ENCODE measurements at regions of chr5 and their contacts with region 1.

Region 1: DNA sequence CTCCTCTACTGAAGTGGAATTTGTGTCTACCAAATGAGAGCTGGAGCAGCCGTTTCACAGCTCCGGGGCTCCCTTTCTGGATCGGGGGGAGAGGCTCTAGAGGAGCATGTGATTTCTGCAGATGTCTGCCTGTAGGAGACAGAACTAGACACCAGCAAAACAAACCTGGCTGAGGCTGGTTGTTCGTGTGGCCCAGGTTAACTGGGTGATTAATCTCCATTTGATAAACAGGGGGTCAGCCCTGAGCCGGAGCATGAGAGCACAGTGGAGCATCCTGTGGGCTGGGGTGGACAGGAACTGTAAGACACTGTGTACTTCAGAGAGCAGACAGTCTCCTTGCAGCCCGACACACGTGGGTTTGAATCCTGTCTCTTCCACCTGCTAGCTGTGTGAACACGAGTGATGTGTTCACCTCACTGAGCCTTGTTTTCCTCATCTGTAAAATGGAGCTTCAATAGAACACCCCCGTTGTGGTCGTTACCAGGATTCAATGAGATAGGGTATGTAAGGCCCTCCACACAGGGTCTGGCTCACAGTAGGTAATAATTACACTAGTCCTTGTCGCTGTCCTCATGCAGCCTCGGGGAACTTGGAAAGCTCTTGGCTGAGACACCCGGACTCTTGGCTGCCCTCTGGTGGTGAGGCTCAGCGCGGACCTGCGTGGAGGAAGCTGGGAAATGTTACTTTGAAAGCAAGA is 12.9 kb downstream of the CXCL14 start:
- DNase-seq: peak; percentile 79

Region 2: GRCh38 chr5:135457424-135458071 is 108.3 kb before region 1 on chr5:
- CTCF ChIA-PET with region 1: interaction called, 102 read pairs
- POLR2A ChIA-PET with region 1: interaction called, 4 read pairs
- DNase-seq: peak; percentile 83

Region 3: DNA sequence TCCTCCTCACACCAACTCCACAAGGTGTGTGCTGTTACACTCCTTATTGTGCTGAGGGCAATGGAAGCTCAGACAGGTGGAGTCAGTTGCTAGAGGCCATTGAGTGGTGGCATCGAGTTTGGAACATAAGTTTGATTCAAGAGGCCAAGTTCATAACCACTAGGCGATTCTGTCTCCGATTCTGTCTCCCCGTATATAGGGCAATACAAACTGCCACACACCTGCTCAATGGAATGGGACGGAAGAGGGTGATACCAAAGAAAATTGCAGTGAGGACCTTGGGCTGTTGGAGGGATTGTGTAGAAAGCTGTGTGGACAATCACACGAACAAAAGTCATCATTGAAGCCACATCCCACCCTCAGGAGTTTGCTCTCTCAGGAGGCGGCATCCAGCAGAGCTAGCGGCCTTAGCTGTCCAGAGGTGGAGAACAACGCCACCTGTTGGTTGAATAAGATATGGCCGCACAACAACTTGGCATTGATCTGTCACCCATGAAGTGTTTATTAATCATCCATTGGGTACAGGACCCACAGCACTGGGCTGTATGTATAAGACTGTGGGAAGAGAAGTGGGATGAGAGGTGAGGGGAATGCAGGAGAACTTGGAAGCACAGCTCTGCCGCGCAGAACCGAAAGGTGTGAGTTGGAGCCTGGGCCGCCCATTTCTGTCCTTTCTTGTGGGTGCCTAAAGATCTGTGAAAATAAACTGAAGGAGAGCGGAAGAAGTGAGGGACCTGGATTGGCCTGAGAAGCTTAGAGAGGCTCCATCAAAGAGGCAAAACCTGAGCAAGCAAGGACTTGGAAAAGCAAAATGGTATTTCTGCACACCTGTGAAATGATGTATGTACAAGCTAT is 14.1 kb before region 1 on chr5:
- CTCF ChIA-PET with region 1: interaction called, 124 read pairs
- POLR2A ChIA-PET with region 1: interaction called, 3 read pairs
- DNase-seq: peak; percentile 79

Region 4: DNA sequence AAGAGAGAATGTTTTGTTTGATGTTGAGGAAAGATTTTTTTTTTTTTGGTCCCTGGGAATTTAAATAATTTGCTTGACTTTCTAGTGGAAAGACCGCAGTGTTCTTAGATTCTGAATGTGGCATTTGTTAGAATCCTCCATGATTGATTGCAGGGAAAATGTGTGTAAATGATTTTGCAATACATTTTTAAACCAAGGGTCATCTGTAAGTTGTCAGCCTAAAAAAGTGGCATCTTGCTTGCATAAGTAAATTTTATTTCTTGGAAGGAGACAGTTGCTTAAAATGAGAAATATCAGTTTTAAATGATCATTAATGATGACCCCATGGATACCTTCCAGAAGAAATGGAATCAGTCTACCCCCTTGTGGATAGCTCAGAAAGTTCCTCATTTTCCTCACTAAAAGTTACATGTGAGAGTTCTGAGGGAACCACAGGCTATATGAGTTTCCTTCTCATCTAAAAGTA is 163.5 kb after region 1 on chr5:
- CTCF ChIA-PET with region 1: interaction called, 19 read pairs
- POLR2A ChIA-PET with region 1: no interaction called
- DNase-seq: no peak

Region 5: GRCh38 chr5:135834639-135835529 is 269.0 kb after region 1 on chr5 and contains the start of gene SLC25A48:
- CTCF ChIA-PET with region 1: interaction called, 38 read pairs
- POLR2A ChIA-PET with region 1: no interaction called
- DNase-seq: peak; percentile 85